Left cardiac atrium (tissue), 4 donors: ENCODE measurements at regions of chr4 and their contacts with region 1.

Region 1: GRCh38 chr4:140004549-140004895 is 149.5 kb downstream of the MAML3 start:
- DNase-seq: peak; percentile 61
- ATAC-seq: peak; percentile 92 to 96

Region 2: DNA sequence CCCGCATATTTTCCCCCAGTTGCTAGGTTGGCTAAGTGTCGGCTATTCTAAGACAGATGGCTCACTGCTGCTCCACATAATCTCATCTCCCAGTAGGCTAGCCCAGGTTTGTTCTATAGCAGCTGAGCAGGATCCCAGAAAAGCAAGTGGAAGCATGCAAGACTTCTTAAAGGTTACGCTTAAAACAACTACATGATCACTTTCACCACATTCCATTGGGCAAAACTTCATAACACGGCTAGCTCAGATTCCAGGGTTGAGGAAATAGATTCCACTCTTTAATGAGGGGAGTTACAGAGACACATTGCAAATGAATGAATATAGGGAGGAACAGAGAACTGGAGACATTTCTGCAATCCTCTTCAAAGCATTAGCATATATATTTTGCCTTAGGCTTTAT is 563.5 kb before region 1 on chr4:
- intact Hi-C with region 1: no loop called
- DNase-seq: no peak
- ATAC-seq: no peak

Region 3: DNA sequence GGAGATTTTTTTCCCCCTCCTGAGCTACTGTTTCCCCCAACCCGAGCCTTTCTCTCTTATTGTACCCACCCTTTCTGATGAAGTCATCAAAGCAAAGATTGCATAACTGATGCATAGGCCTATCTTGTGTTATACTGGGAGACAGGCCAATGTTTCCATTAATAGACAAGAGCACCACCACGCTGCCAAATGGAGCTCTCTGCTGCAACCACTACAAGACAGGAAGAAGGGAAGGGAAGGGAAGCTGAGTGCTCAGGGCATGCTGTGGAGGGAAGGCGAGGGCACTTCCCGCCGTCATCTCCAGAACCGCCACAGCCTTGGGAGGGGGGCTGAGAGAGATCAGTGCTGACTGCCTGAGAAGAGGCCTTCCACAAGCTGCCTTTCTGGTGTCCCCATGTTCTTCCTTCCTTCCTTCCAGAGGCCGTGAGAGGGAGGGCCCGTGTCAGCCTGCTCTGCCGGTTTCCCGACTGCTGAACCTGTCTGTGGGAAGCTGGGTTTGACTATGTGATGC is 263.9 kb before region 1 on chr4:
- intact Hi-C with region 1: loop called (anchors 10 kb)
- DNase-seq: peak; percentile 78
- ATAC-seq: peak; percentile 93 to 97

Region 4: DNA sequence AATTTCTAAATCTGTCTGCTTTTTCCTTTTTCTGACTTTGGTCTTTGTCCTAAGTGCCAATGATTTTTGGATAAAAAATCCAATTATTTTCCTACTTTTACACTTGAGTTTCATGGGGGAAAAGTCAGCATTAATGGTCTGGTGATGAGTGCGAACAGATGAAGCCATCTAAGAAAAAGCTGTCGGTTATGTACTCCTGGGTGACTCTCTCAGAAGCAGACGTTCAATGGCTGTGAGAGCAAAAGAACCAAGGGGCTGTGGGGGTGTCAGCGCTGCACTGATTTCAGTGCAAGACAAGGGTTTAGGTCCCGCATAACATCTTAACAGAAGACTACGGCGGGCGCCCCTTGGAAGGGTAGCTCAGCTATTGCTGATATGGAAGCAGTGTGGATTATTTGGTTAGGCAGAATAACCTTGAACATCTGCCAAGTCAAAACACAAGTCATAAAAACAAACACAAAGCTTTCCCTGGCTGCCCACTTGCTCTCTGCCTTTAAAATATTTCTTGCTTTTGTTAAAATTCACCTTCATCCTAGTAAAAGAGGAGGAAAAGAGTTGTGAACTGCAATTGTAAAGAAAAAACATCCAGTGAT is 91.0 kb before region 1 on chr4:
- intact Hi-C with region 1: no loop called
- DNase-seq: no peak
- ATAC-seq: peak in 1 of 2 donors; percentile 50